ENCODE measurements at regions of chr16 and their contacts with region 1.

Region 1: DNA sequence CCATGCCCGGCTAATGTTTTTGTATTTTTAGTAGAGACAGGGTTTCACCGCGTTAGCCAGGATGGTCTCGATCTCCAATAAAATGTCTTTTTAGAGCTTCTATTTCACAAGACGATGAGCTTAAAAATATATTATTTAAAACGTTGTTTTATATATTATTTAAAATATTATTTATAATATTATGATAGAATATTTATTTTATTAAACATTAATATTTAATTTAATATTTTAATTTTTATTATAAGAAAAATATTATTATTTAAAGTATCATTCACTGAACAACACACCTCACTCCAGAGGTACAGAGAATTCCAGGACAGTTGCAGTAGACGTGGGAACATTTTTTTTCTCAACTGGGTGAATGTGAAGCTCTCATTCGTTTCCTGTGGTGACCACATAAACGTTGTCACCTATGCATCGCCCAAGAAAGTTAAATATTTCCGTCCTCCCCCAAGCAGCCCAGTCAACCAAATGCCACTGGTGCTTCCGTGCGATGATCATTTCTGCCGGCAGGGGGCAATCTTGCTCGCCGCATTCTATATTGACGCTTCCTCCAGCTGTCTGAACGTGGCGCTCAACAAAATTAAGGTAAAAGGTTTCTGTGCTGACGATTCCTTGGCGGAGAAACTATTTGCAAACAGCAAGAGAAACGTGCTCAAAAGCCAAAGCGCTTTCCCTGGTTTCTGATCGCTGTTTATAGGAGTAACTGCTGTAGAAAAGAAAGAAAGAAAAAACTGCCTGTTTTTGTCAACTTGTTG is 41.7 kb upstream of the PRSS54 start:
- DNase-seq: peak; percentile 61
- ATAC-seq: peak; percentile 98
- H3K4me3 ChIP-seq: no peak overlapping the region
- H3K27ac ChIP-seq: no peak overlapping the region
- H3K4me1 ChIP-seq: no peaks in the 10 kb centered on the region
- H3K27me3 ChIP-seq: peaks cover 5% of the 10 kb centered on the region
- CTCF ChIP-seq: peak; percentile 95
- POLR2A ChIP-seq: no peak
- RAD21 ChIP-seq: peak; percentile 88

Region 2: DNA sequence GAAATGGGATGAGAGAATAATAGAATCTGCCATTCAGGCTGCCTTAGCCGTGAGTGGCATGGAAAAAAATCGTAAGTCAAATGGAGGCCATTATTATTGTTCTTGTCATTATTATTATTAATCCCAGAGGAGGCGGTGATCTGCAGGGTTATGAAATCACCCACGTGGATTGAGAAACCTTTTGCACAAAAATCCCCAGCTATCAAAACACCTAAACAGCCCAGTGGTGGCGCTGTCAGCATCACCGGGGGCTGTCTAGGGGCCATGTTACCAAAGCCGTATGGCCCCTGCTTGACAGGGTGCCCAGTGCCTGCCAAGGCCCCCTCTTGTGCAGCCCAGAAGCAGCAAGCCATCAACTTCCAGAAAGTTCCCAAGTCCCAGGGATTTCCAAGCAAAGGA is 390.8 kb before region 1 on chr16:
- CTCF ChIA-PET with region 1: no interaction called
- POLR2A ChIA-PET with region 1: no interaction called
- dilution Hi-C with region 1: no loop called
- in situ Hi-C with region 1: no loop called
- intact Hi-C with region 1: no loop called
- DNase-seq: no peak
- ATAC-seq: no peak
- H3K4me3 ChIP-seq: no peak overlapping the region
- H3K27ac ChIP-seq: no peak overlapping the region
- H3K4me1 ChIP-seq: no peaks in the 10 kb centered on the region
- H3K27me3 ChIP-seq: peaks cover 38% of the 10 kb centered on the region
- CTCF ChIP-seq: 0 out of 2 replicates have a peak, but pooled peaks have one; percentile 11
- POLR2A ChIP-seq: no peak
- RAD21 ChIP-seq: no peak

Region 3: DNA sequence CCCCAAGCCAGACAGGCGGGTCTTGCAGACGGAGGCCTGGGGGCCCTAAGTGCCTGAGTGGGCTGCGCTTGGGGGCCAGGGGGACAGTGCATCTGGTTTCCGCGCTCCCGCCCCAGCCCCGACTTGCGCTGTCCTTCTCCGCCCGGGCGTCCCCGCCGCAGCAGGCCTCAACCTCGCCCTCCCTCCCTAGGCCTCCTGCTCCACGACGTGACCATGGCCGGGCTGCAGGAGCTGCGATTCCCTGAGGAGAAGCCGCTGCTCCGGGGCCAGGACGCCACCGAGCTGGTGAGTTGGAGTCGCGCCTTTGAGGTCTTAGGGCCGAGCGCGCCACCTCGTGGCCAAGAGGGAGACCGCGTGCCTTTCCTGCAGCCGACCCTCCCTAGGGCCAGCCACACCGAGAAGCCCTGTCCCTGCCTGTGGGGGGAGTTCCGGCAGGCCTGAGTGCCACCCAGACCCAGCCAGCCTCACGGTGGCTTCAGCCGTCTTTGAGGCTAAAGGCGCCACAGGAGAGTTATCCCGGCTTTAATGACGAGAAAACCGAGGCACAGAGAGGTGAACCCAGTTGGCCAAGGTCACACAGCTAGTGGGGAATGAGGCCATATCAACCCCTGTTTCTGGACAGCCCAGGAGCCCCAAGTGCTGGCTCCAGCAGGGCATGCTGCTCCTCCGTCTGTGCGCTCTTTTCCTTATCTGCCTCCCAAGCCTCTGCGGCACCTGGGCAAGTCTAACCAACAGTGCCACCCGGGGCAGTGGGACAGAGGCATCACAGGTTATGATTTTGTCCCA is 151.2 kb after region 1 on chr16:
- CTCF ChIA-PET with region 1: interaction called, 39 read pairs
- POLR2A ChIA-PET with region 1: interaction called, 3 read pairs
- dilution Hi-C with region 1: no loop called
- in situ Hi-C with region 1: loop called (anchors 5 kb)
- intact Hi-C with region 1: loop called (anchors 1 kb)
- DNase-seq: peak; percentile 67
- ATAC-seq: peak; percentile 99
- H3K4me3 ChIP-seq: no peak overlapping the region
- H3K27ac ChIP-seq: no peak overlapping the region
- H3K4me1 ChIP-seq: no peaks in the 10 kb centered on the region
- H3K27me3 ChIP-seq: peaks cover 10% of the 10 kb centered on the region
- CTCF ChIP-seq: peak; percentile 89
- POLR2A ChIP-seq: no peak
- RAD21 ChIP-seq: peak; percentile 89

Region 4: DNA sequence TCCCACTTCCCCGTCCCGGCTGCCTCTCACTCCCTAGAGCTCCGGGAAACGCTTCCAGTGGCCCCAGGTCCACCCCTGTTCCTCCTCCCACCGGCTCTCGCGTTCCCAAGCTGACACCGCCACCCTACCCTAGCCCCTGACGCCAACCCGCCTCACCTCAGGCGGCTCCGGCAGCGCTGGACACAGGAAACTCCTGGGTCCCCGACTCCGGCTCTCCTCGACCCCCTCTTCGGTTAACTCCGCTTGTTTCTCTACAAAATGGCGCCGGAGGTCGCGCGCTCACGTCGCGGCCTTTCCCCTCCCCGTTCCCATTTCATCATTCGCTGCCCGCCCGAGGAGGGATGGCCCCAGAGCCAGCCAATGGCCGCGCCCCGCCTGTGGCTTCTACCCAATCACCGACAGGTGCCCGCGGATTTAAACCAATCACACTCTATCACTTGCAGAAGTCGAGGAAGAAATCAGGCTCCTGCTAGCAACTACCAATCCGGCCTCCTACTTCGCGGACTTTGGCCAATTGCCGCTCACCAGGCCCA is 293.1 kb after region 1 on chr16 and contains the start of gene CNOT1:
- CTCF ChIA-PET with region 1: no interaction called
- POLR2A ChIA-PET with region 1: no interaction called
- dilution Hi-C with region 1: no loop called
- in situ Hi-C with region 1: no loop called
- intact Hi-C with region 1: loop called (anchors 10 kb)
- DNase-seq: peak; percentile 100
- ATAC-seq: peak; percentile 92
- H3K4me3 ChIP-seq: peak within 1 kb of the TSS; percentile 82
- H3K27ac ChIP-seq: peak within 1 kb of the TSS; percentile 90
- H3K4me1 ChIP-seq: no peaks in the 10 kb centered on the region
- H3K27me3 ChIP-seq: no peaks in the 10 kb centered on the region
- CTCF ChIP-seq: no peak
- POLR2A ChIP-seq: peak; percentile 93
- RAD21 ChIP-seq: no peak
- total RNA-seq, gene CNOT1: 203 and 357 TPM in 2 replicates

Region 5: DNA sequence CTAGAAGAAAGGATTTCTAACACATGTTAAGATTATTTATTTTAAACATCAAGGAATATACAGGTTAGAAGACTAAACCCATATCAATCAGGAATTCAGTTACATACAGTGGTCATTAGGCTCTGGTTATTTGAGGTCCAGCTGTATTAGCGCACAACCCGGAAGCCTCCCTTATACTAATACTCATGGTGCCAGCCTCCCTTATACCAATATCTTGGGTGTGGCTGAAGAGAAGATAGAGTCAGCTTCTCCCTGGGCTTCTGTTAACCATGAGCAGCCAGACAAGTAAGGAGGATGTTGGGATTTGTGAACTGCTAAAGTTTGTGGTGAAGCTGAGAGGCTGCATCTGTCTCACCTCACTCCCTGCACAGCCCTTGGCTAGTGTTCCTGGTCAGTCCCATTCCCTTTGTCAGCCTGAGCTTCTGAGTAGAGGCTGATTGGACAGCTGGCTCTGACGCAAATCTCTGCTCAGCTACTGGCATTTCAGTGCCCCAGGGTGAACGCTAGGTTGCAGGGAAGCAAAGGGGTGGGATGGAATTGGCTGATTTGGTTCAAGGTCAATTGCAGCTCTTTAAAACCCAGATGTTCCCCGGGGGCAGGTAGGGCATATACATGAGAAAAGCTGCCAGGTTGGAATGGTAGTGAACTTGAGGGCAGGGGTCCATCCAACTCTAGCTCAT is 316.1 kb after region 1 on chr16:
- CTCF ChIA-PET with region 1: no interaction called
- POLR2A ChIA-PET with region 1: no interaction called
- dilution Hi-C with region 1: no loop called
- in situ Hi-C with region 1: loop called (anchors 10 kb)
- intact Hi-C with region 1: no loop called
- DNase-seq: peak; percentile 60
- ATAC-seq: peak; percentile 77
- H3K4me3 ChIP-seq: no peak overlapping the region
- H3K27ac ChIP-seq: no peak overlapping the region
- H3K4me1 ChIP-seq: peaks cover 8% of the 10 kb centered on the region
- H3K27me3 ChIP-seq: peaks cover 2% of the 10 kb centered on the region; the same call in 1 of the 2 replicates
- CTCF ChIP-seq: no peak
- POLR2A ChIP-seq: no peak
- RAD21 ChIP-seq: no peak

Region 6: DNA sequence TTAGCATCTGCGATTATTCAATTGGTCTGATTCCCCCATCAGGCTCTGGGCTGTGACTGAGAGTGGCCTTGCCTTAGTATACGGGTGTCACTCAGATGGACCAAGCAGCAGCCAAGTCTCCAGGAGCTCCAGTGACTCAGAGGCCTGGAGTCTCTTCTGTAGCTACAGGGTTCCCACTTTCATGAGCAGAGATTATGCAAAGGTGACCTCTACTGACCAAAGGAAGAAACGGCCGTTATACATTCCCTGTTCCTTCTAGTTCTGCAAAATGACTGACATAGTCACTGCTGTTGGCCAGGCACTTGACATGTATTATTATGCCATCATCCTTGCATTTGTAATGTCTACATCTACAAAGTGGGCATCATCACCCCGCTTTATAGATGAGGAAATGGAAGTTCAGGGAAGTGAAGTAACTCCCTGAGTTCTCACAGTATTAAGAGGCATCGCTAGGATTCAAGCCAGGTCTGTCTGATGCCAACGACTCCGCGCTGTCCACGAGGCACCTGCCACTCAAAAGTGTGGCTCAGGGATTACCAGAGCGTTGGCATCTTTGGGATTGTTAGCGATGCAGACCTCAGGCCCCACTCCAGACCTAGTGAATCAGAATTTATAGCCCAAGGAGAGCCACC is 324.8 kb after region 1 on chr16:
- CTCF ChIA-PET with region 1: interaction called, 8 read pairs
- POLR2A ChIA-PET with region 1: no interaction called
- dilution Hi-C with region 1: no loop called
- in situ Hi-C with region 1: loop called (anchors 10 kb)
- intact Hi-C with region 1: loop called (anchors 1 kb)
- DNase-seq: peak; percentile 91
- ATAC-seq: peak; percentile 97
- H3K4me3 ChIP-seq: no peak overlapping the region
- H3K27ac ChIP-seq: no peak overlapping the region
- H3K4me1 ChIP-seq: no peaks in the 10 kb centered on the region
- H3K27me3 ChIP-seq: no peaks in the 10 kb centered on the region
- CTCF ChIP-seq: peak; percentile 87
- POLR2A ChIP-seq: no peak
- RAD21 ChIP-seq: peak; percentile 91

Region 7: GRCh38 chr16:58755989-58756649 is 419.6 kb after region 1 on chr16:
- CTCF ChIA-PET with region 1: interaction called, 4 read pairs
- POLR2A ChIA-PET with region 1: no interaction called
- dilution Hi-C with region 1: no loop called
- in situ Hi-C with region 1: loop called (anchors 10 kb)
- intact Hi-C with region 1: loop called (anchors 2 kb)
- DNase-seq: peak; percentile 67
- ATAC-seq: peak; percentile 99
- H3K4me3 ChIP-seq: no peak overlapping the region
- H3K27ac ChIP-seq: no peak overlapping the region
- H3K4me1 ChIP-seq: no peaks in the 10 kb centered on the region
- H3K27me3 ChIP-seq: peaks cover 8% of the 10 kb centered on the region
- CTCF ChIP-seq: peak; percentile 64
- POLR2A ChIP-seq: no peak
- RAD21 ChIP-seq: peak; percentile 83

Measured in IMR-90 (cell line).